Activated CD8-positive, alpha-beta T cell treated with anti-CD3 and anti-CD28 coated beads, Interleukin-2, amount 10 ng/mL, durations not matched to agents 7 days and 5 days (primary cell): ENCODE measurements at regions of chr10 and their contacts with region 1.

Region 1: DNA sequence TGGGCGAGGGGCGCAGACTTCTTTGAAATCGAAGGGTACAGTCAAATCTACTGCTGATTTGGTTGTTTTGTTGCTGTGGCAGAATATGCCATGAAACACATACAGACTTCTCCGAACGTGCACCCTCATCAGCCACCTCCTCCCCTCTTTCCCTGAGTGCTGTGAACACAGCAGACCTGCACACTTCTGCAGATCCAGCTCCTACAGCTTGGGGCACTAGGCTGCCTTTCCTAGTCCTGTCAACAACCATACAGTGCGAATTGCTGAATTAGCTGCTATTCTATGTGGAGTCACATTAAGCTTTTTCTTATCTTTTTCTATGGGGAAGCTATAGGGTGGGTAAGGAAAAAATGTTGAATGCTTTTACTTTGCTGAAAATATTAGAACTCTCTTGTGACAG is 57.5 kb downstream of the COL17A1 start:
- DNase-seq: no peak
- ATAC-seq: no peak
- H3K4me3 Mint-ChIP-seq: no peak overlapping the region
- H3K27ac Mint-ChIP-seq: no peak overlapping the region
- H3K4me1 Mint-ChIP-seq: no peaks in the 10 kb centered on the region
- H3K27me3 Mint-ChIP-seq: no peaks in the 10 kb centered on the region

Region 2: DNA sequence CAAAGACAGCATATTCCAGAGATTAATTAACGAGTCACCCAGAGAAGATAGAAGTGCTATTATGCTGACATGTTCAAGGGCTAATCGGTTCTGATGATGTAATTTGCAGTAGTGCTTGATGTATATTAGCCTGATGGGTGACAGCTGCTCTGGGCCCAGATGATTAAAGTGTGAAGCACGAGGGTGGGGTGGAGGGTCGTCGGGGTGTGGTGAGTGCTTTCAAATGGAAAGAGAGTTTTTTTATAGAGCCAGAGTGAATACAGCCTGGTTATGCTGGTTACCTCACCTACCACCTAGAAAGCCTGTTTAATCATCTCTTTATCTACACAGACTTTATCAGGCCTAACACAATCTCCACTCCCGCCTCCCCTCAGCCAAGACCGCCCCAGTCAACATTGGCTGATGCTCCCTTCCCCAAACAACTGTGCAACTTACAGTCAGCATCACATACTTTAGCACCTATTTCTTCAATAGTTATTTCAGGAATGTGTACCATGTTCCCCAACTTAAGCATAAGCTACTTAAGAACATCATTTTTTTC is 98.7 kb before region 1 on chr10:
- CTCF ChIA-PET with region 1: no interaction called
- POLR2A ChIA-PET with region 1: no interaction called
- DNase-seq: no peak
- ATAC-seq: no peak
- H3K4me3 Mint-ChIP-seq: no peak overlapping the region
- H3K27ac Mint-ChIP-seq: no peak overlapping the region
- H3K4me1 Mint-ChIP-seq: no peaks in the 10 kb centered on the region
- H3K27me3 Mint-ChIP-seq: peaks cover 4% of the 10 kb centered on the region

Region 3: GRCh38 chr10:104016661-104017060 is 11.5 kb before region 1 on chr10:
- CTCF ChIA-PET with region 1: interaction called, 12 read pairs
- POLR2A ChIA-PET with region 1: no interaction called
- DNase-seq: no peak
- ATAC-seq: no peak
- H3K4me3 Mint-ChIP-seq: no peak overlapping the region
- H3K27ac Mint-ChIP-seq: no peak overlapping the region
- H3K4me1 Mint-ChIP-seq: no peaks in the 10 kb centered on the region
- H3K27me3 Mint-ChIP-seq: no peaks in the 10 kb centered on the region